ENCODE measurements at regions of chr19 and their contacts with region 1.

Region 1: GRCh38 chr19:796692-797527 is at the start of gene PTBP1:
- DNase-seq: peak; percentile 99 to 100 (median 100)
- H3K4me3 ChIP-seq: peak within 1 kb of the TSS; percentile 66 to 74
- H3K4me3 Mint-ChIP-seq: peak within 1 kb of the TSS; percentile 92 to 96 (median 94)
- H3K27ac ChIP-seq: peak within 1 kb of the TSS; percentile 67
- H3K27ac Mint-ChIP-seq: peak within 1 kb of the TSS; percentile 90 to 96 (median 93)
- H3K4me1 ChIP-seq: peaks cover 39% of the 10 kb centered on the region
- H3K4me1 Mint-ChIP-seq: peaks cover 16 to 40% (median 27%) of the 10 kb centered on the region in 4 donors
- H3K27me3 ChIP-seq: no peaks in the 10 kb centered on the region
- H3K27me3 Mint-ChIP-seq: no peaks in the 10 kb centered on the region
- total RNA-seq, gene PTBP1: 315 TPM

Region 2: DNA sequence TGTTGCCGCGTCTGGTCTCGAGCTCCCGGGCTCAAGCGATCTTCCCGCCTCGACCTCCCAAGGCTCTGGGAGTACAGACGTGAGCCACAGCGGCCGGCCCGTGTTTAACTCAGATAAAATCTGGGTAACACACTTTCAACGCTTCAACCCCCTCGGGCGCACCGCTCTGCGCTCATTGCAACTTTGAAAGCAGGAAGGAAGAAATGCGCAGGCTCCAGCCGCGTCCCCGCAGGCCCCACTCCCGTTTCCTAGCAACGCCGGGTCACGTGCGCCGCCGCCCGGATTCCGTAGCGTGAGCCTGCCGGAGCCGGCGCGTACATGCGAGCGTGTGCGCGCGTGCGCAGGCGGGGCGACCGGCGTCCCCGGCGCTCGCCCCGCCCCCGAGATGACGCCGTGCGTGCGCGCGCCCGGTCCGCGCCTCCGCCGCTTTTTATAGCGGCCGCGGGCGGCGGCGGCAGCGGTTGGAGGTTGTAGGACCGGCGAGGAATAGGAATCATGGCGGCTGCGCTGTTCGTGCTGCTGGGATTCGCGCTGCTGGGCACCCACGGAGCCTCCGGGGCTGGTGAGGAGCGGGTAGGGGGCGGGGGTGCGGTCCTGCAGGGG is 224.7 kb before region 1 on chr19 and contains the start of gene BSG:
- CTCF ChIA-PET with region 1: no interaction called
- POLR2A ChIA-PET with region 1: no interaction called
- intact Hi-C with region 1: loop called (anchors 1 kb)
- DNase-seq: peak; percentile 98 to 99 (median 99)
- H3K4me3 ChIP-seq: peak within 1 kb of the TSS; percentile 75 to 81
- H3K4me3 Mint-ChIP-seq: peak within 1 kb of the TSS; percentile 95 to 99 (median 98)
- H3K27ac ChIP-seq: peak within 1 kb of the TSS; percentile 70
- H3K27ac Mint-ChIP-seq: peak within 1 kb of the TSS; percentile 96 to 100 (median 98)
- H3K4me1 ChIP-seq: peaks cover 46% of the 10 kb centered on the region
- H3K4me1 Mint-ChIP-seq: peaks cover 18 to 49% (median 35%) of the 10 kb centered on the region in 4 donors
- H3K27me3 ChIP-seq: no peaks in the 10 kb centered on the region
- H3K27me3 Mint-ChIP-seq: no peaks in the 10 kb centered on the region
- total RNA-seq, gene BSG: 150 to 151 TPM

Region 3: GRCh38 chr19:662962-663681 is 133.8 kb before region 1 on chr19 and contains the start of gene RNF126:
- CTCF ChIA-PET with region 1: no interaction called
- POLR2A ChIA-PET with region 1: interaction called, 5 read pairs
- intact Hi-C with region 1: loop called (anchors 1 kb)
- DNase-seq: peak; percentile 86 to 90 (median 89)
- H3K4me3 ChIP-seq: peak within 1 kb of the TSS; percentile 83 to 99
- H3K4me3 Mint-ChIP-seq: peak within 1 kb of the TSS; percentile 94 to 100 (median 98)
- H3K27ac ChIP-seq: peak within 1 kb of the TSS; percentile 96
- H3K27ac Mint-ChIP-seq: peak within 1 kb of the TSS; percentile 97 to 100 (median 99)
- H3K4me1 ChIP-seq: peaks cover 46% of the 10 kb centered on the region
- H3K4me1 Mint-ChIP-seq: peaks cover 7 to 53% (median 34%) of the 10 kb centered on the region in 4 donors
- H3K27me3 ChIP-seq: no peaks in the 10 kb centered on the region
- H3K27me3 Mint-ChIP-seq: peaks cover 0 to 3% of the 10 kb centered on the region in 2 donors
- total RNA-seq, gene RNF126: 105 to 112 TPM

Region 4: DNA sequence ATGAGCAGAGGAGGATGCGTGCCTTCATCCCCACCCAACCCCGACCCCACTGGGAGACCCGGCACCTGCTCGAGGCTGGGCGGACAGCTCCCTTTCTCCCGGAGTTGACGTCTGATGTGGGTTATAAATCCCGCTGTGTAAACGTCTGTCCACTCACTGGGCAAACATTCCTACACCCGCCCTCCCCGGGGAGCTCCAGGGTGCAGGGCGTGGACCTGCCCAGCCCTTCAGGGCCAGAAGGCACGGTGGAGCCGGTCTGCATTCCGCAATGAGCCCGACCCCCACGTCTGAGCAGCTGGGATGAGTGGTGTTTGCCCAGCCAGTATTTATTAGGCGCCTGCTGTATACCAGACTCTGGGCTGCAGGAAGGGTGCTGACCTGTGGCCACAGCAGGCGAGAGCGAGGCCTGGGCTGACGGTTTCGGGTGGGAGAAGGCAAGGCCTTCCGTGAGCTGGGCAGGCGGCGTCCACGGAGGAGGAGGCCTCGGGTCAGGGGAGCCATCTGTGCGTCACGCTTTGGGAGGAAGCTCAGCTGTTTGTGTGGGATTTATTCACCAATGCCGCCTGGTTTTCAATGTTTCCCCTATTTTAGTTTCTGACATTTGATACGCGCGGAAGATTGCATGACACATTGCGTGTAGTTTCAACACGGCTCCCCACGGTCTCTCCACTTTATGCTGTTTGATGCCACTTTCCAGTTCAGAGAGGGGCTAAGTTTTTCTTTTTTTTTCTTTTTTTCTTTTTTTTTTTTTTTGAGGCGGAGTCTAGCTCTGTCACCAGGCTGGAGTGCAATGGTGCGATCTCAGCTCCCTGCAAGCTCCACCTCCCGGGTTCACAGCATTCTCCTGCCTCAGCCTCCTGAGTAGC is 44.0 kb before region 1 on chr19:
- CTCF ChIA-PET with region 1: no interaction called
- POLR2A ChIA-PET with region 1: no interaction called
- intact Hi-C with region 1: no loop called
- DNase-seq: no peak
- H3K4me3 ChIP-seq: no peak overlapping the region
- H3K4me3 Mint-ChIP-seq: no peak overlapping the region
- H3K27ac ChIP-seq: no peak overlapping the region
- H3K27ac Mint-ChIP-seq: no peak overlapping the region
- H3K4me1 ChIP-seq: no peaks in the 10 kb centered on the region
- H3K4me1 Mint-ChIP-seq: no peaks in the 10 kb centered on the region
- H3K27me3 ChIP-seq: no peaks in the 10 kb centered on the region
- H3K27me3 Mint-ChIP-seq: no peaks in the 10 kb centered on the region

Region 5: DNA sequence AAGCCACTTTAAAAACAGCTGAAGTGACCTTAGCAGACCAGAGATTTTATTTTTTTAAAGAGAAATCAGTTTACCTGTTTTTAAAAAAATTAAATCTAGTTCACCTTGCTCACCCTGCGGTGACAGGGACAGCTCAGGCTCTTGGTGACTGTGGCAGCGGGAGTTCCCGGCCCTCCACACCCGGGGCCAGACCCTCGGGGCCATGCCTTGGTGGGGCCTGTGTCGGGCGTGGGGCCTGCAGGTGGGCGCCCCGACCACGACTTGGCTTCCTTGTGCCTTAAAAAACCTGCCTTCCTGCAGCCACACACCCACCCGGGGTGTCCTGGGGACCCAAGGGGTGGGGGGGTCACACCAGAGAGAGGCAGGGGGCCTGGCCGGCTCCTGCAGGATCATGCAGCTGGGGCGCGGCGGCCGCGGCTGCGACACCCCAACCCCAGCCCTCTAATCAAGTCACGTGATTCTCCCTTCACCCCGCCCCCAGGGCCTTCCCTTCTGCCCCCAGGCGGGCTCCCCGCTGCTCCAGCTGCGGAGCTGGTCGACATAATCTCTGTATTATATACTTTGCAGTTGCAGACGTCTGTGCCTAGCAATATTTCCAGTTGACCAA is 14.1 kb after region 1 on chr19:
- CTCF ChIA-PET with region 1: no interaction called
- POLR2A ChIA-PET with region 1: interaction called, 11 read pairs
- intact Hi-C with region 1: no loop called
- DNase-seq: no peak
- H3K4me3 ChIP-seq: no peak overlapping the region
- H3K4me3 Mint-ChIP-seq: no peak overlapping the region
- H3K27ac ChIP-seq: no peak overlapping the region
- H3K27ac Mint-ChIP-seq: peak overlapping the region in 1 of 7 donors; percentile 64
- H3K4me1 ChIP-seq: no peaks in the 10 kb centered on the region
- H3K4me1 Mint-ChIP-seq: peaks cover 8 to 12% (median 10%) of the 10 kb centered on the region in 4 donors
- H3K27me3 ChIP-seq: no peaks in the 10 kb centered on the region
- H3K27me3 Mint-ChIP-seq: no peaks in the 10 kb centered on the region

Region 6: GRCh38 chr19:1020868-1021425 is 224.0 kb after region 1 on chr19 and contains the start of gene TMEM259:
- CTCF ChIA-PET with region 1: no interaction called
- POLR2A ChIA-PET with region 1: interaction called, 4 read pairs
- intact Hi-C with region 1: loop called (anchors 1 kb)
- DNase-seq: peak; percentile 98 to 99 (median 98)
- H3K4me3 ChIP-seq: peak within 1 kb of the TSS; percentile 66 to 69
- H3K4me3 Mint-ChIP-seq: peak within 1 kb of the TSS; percentile 86 to 92 (median 89)
- H3K27ac ChIP-seq: peak within 1 kb of the TSS; percentile 95
- H3K27ac Mint-ChIP-seq: peak within 1 kb of the TSS; percentile 97 to 100 (median 100)
- H3K4me1 ChIP-seq: peaks cover 54% of the 10 kb centered on the region
- H3K4me1 Mint-ChIP-seq: peaks cover 19 to 62% (median 39%) of the 10 kb centered on the region in 4 donors
- H3K27me3 ChIP-seq: no peaks in the 10 kb centered on the region
- H3K27me3 Mint-ChIP-seq: peaks cover 0 to 6% of the 10 kb centered on the region in 2 donors
- total RNA-seq, gene TMEM259: 315 to 329 TPM

Region 7: GRCh38 chr19:1406774-1407499 is 610.0 kb after region 1 on chr19:
- CTCF ChIA-PET with region 1: no interaction called
- POLR2A ChIA-PET with region 1: no interaction called
- intact Hi-C with region 1: loop called (anchors 1 kb)
- DNase-seq: peak; percentile 98 to 100 (median 100)
- H3K4me3 ChIP-seq: peak overlapping the region; percentile 33 to 57
- H3K4me3 Mint-ChIP-seq: peak overlapping the region; percentile 73 to 87 (median 82)
- H3K27ac ChIP-seq: peak overlapping the region; percentile 88
- H3K27ac Mint-ChIP-seq: peak overlapping the region; percentile 67 to 86 (median 84)
- H3K4me1 ChIP-seq: peaks cover 43% of the 10 kb centered on the region
- H3K4me1 Mint-ChIP-seq: peaks cover 20 to 48% (median 37%) of the 10 kb centered on the region in 4 donors
- H3K27me3 ChIP-seq: no peaks in the 10 kb centered on the region
- H3K27me3 Mint-ChIP-seq: no peaks in the 10 kb centered on the region